Cardiac septum (tissue), 1 donor: ENCODE measurements at regions of chr11 and their contacts with region 1.

Region 1: DNA sequence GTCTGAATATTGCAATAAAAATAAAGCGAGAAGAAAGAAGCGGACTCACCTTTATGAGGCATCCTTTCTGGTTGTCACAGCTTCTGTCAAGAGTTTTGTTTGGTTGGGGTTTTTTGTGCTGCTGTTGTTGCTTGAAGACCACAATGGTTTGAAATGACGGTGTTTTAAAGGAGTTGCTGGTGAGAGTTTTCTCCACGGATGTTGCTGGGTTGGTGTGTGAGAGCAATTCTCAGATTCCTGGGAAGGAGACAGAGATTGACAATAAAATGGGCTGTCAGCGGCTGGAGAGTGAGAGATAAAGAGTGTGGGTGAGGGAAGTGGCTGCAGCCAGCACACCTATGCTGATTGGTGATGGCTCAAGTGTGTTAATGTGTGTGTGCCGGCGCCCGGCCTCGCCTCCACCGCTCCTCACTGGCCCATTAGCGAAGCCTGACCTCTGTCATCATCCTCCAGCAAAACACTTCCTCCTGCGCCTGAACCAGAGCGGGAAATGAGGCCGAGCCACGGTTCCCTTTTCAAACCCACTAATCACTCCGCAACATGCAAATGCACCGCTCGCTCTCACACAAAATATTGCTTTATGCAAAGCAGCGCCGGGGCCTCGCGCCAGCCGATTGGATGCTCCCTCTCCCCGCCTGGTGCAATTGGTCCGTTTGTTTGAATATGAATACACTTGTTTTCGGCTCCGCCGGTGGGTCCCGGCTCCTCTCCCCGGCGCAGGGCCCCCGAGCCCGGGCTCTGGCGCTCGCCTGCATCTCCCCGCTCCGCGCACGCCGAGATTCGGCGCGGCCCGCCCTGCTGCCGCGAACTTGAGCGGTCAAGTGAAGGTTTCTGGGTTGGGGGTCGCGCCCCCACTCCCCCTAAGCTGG is at the start of gene PAX6:
- DNase-seq: no peak
- total RNA-seq, gene PAX6: 0.46 TPM

Region 2: GRCh38 chr11:31641477-31642062 is 169.4 kb before region 1 on chr11:
- intact Hi-C with region 1: loop called (anchors 10 kb)
- DNase-seq: no peak

Region 3: GRCh38 chr11:31725176-31725575 is 85.8 kb before region 1 on chr11:
- intact Hi-C with region 1: no loop called
- DNase-seq: no peak

Region 4: GRCh38 chr11:32297611-32298011 is 486.6 kb after region 1 on chr11:
- intact Hi-C with region 1: no loop called
- DNase-seq: no peak